AG04450 (cell line): ENCODE measurements at regions of chr7 and their contacts with region 1.

Region 1: GRCh38 chr7:81684513-81685269 is 85.2 kb downstream of the HGF start:
- DNase-seq: peak; percentile 100
- H3K4me3 ChIP-seq: no peak overlapping the region
- H3K27ac ChIP-seq: peak overlapping the region; percentile 93
- H3K27me3 ChIP-seq: no peaks in the 10 kb centered on the region
- CTCF ChIP-seq: no peak

Region 2: DNA sequence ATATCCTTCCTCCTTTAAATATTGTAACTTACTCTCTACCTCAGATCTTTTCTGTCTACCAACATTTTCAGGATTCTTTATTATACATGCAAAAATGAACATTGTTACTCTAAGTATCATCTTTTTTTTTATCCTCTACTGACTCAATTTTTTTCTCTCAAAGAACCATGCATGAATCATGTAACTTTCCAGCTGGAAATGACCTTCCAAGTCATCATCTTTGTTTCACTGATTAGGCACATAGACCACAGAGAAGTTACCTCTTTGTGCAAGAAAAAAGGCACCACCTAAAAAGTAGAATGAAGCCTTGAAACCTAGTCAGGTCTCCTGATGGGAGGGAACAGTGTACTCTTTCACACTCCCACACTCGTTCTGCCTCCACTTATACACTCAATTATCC is 149.7 kb before region 1 on chr7:
- CTCF ChIA-PET with region 1: no interaction called
- POLR2A ChIA-PET with region 1: no interaction called
- DNase-seq: no peak
- H3K4me3 ChIP-seq: no peak overlapping the region
- H3K27ac ChIP-seq: no peak overlapping the region
- H3K27me3 ChIP-seq: no peaks in the 10 kb centered on the region
- CTCF ChIP-seq: no peak

Region 3: GRCh38 chr7:81725812-81726127 is 41.1 kb after region 1 on chr7:
- CTCF ChIA-PET with region 1: no interaction called
- POLR2A ChIA-PET with region 1: interaction called, 11 read pairs
- DNase-seq: peak; percentile 98
- H3K4me3 ChIP-seq: no peak overlapping the region
- H3K27ac ChIP-seq: peak overlapping the region; percentile 83
- H3K27me3 ChIP-seq: no peaks in the 10 kb centered on the region
- CTCF ChIP-seq: no peak